ENCODE measurements at regions of chr5 and their contacts with region 1.

Region 1: GRCh38 chr5:131488463-131488862 is 146.6 kb downstream of the RAPGEF6 start:
- DNase-seq: no peak
- ATAC-seq: no peak
- H3K4me3 ChIP-seq: no peak overlapping the region
- H3K27ac ChIP-seq: no peak overlapping the region
- H3K4me1 ChIP-seq: no peaks in the 10 kb centered on the region
- H3K27me3 ChIP-seq: no peaks in the 10 kb centered on the region
- CTCF ChIP-seq: no peak
- EP300 ChIP-seq: no peak
- POLR2A ChIP-seq: no peak
- RAD21 ChIP-seq: no peak

Region 2: DNA sequence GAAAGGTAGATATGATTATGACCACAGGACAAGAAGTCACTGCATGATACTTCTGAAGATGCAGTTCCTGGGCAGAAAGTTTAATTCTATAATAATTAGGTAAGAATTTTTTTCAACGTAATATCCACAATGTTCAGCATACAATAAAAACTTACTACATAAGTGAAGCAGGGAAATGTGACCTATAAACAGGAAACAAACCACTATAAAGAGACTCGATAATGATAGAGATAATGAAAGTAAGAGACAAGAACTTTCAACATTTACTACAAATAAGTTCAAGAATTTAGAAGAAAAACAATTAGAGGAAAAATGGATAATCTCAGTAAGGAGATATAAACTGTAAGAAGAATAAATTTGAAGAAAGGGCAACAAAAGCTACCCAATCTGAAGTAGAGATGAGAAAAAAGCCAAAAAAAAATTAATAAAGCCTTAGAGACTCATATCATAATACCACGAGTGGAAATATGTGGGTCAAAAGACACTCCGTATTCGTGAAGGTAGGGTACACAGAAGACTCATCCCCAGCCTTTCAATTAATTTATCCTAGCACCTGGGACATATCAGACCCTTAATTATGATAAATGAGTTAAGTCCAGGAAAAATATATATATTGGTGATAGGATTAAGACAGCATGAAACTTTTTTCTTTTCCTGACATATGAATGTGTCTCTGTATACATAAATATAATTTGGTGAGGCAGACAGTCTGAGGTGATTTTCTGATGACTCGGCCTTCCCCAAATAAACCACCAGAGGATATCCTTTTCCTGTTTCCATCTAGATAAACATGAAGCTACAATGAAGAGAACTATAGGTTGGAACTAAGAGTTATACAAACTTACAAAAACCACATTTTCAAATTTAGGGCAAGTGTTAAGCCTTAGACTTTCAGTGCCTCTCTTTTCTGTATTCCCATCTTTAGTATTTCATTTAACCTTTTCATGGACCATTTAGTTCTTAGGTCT is 26.1 kb after region 1 on chr5:
- CTCF ChIA-PET with region 1: no interaction called
- POLR2A ChIA-PET with region 1: no interaction called
- in situ Hi-C with region 1: no loop called
- intact Hi-C with region 1: loop called (anchors 1 kb)
- DNase-seq: no peak
- ATAC-seq: no peak
- H3K4me3 ChIP-seq: no peak overlapping the region
- H3K27ac ChIP-seq: no peak overlapping the region
- H3K4me1 ChIP-seq: 0 out of 2 replicates have a peak, but pooled peaks cover 4% of the 10 kb centered on the region
- H3K27me3 ChIP-seq: no peaks in the 10 kb centered on the region
- CTCF ChIP-seq: no peak
- EP300 ChIP-seq: no peak
- POLR2A ChIP-seq: no peak
- RAD21 ChIP-seq: no peak

Measured in HepG2 (cell line).